Left ventricle myocardium inferior (tissue), 1 donor: ENCODE measurements at regions of chr5 and their contacts with region 1.

Region 1: DNA sequence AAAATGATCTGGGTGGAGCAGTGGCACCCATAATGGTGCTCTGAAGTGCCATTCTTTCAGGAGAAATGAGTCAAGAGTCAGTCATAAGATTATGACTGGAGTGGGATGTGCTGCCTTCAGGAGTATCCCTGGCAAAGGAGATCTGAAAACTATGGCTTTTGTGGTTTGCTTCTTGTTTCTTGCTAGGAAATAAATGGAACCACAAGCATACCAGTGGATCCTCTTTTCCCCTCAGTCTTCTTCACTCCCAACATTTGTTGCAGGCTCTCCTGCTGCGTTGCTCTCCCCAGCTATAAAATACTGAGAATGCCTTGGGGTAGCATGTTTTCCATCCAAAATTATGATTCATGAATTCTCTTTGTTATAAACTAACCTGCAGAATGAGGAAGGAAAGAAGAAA is 199.1 kb downstream of the NNT start:
- DNase-seq: no peak
- H3K4me3 ChIP-seq: no peak overlapping the region
- H3K27ac ChIP-seq: no peak overlapping the region
- H3K4me1 ChIP-seq: no peaks in the 10 kb centered on the region
- H3K27me3 ChIP-seq: no peaks in the 10 kb centered on the region
- CTCF ChIP-seq: no peak

Region 2: GRCh38 chr5:44257653-44258365 is 455.7 kb after region 1 on chr5:
- intact Hi-C with region 1: loop called (anchors 5 kb)
- DNase-seq: no peak
- H3K4me3 ChIP-seq: no peak overlapping the region
- H3K27ac ChIP-seq: no peak overlapping the region
- H3K4me1 ChIP-seq: no peaks in the 10 kb centered on the region
- H3K27me3 ChIP-seq: no peaks in the 10 kb centered on the region
- CTCF ChIP-seq: no peak

Region 3: GRCh38 chr5:44697025-44697424 is 894.9 kb after region 1 on chr5:
- intact Hi-C with region 1: no loop called
- DNase-seq: no peak
- H3K4me3 ChIP-seq: no peak overlapping the region
- H3K27ac ChIP-seq: no peak overlapping the region
- H3K4me1 ChIP-seq: no peaks in the 10 kb centered on the region
- H3K27me3 ChIP-seq: no peaks in the 10 kb centered on the region
- CTCF ChIP-seq: no peak